AG04449 (cell line): ENCODE measurements at regions of chr1 and their contacts with region 1.

Region 1: DNA sequence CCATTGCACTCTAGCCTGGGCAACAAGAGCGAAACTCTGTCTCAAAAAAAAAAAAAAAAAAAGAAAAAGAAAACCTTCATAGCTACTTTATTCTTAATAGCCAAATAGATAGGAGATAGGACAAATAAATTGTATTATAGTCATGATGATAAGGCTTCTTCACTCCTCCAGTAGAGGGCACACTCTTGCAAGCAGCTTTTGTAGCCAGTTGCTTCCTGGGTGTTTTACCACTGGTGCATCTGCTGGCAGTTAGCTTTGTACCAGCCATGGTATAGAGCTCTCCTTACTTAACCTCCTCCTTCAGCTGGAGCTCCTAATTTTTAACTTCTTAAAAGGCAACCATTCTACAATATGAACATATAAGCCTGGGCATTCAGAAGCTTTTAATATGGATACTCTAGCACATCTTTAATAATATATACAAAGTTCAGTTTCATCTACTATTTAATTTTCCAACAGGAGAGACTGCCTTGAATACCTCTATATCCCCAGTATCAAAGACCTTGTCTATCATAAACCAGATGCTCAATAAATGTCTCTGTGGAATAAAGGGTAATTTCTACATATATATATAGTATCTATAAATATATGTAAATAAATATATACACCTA is 35.8 kb downstream of the EVI5 start:
- DNase-seq: peak; percentile 24
- H3K4me3 ChIP-seq: no peak overlapping the region
- CTCF ChIP-seq: peak; percentile 68

Region 2: GRCh38 chr1:92730476-92730875 is 18.7 kb before region 1 on chr1:
- CTCF ChIA-PET with region 1: interaction called, 30 read pairs
- POLR2A ChIA-PET with region 1: no interaction called
- DNase-seq: no peak
- H3K4me3 ChIP-seq: no peak overlapping the region
- CTCF ChIP-seq: no peak

Region 3: GRCh38 chr1:92759361-92759760 is 10.2 kb after region 1 on chr1:
- CTCF ChIA-PET with region 1: interaction called, 23 read pairs
- POLR2A ChIA-PET with region 1: no interaction called
- DNase-seq: no peak
- H3K4me3 ChIP-seq: no peak overlapping the region
- CTCF ChIP-seq: no peak

Region 4: DNA sequence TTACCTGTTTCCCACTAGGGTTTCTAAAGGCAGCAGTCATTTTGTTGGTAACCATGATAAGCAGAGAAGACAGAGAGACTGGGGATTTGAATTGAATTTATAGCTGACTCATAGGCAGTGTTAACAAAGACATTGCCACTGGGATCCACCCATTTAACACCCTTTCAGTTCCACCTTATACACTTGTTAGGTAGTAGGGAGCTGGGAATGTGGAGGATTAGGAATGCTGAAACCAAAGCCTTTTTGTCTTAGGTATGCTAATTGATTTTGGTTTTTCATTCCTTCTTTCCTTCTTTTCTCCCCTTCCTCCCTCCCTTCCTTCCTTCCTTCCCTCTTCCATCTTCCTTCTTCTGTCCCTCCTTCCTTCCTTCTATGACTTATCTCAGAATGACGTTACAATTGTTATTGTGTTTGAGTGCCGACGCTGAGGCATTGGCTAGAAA is 43.2 kb after region 1 on chr1:
- CTCF ChIA-PET with region 1: interaction called, 28 read pairs
- POLR2A ChIA-PET with region 1: no interaction called
- DNase-seq: no peak
- H3K4me3 ChIP-seq: no peak overlapping the region
- CTCF ChIP-seq: no peak

Region 5: DNA sequence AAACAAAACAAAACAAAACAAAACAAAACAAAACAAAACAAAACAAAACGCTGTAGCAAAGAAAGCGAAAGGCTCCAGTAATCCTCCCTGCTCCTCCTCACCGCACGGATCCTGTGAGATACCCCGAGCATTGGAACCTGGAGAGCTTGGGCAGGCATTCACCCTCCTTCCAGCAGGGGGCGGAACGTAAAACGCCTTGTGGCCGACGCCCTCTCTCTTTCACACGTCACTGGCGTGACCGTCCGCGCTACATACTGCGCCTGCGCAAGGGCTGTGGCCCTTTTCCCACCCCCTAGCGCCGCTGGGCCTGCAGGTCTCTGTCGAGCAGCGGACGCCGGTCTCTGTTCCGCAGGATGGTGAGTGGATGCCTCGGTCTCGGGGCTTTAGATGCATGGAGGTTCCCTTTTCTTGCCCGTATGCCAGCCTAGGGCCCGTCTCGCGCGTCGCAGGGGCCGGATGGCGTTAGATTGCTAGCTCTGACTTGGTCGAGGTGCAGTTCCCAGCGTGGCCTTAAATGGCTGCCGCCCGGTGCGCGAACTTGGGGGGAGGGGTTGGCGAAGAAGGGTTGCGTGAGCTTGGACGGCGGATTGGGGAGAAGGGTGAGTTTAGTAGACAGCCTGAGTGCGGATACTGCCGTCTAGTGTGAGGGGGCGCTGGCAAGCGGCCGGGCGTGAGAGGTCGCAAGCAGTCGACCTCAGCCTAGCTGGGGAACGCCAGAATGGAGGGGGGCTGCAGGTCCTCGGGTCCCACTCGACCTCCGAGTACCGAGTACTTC is 82.8 kb after region 1 on chr1 and contains the start of gene RPL5:
- CTCF ChIA-PET with region 1: interaction called, 34 read pairs
- POLR2A ChIA-PET with region 1: interaction called, 4 read pairs
- DNase-seq: peak; percentile 73
- H3K4me3 ChIP-seq: peak within 1 kb of the TSS; percentile 98
- CTCF ChIP-seq: peak; percentile 98